ENCODE measurements at regions of chr1 and their contacts with region 1.

Region 1: GRCh38 chr1:59596441-59596861 is 218.3 kb upstream of the HOOK1 start:
- DNase-seq: peak; percentile 95
- ATAC-seq: peak; percentile 52
- H3K4me3 ChIP-seq: no peak overlapping the region
- H3K27ac ChIP-seq: peak overlapping the region; percentile 96
- H3K4me1 ChIP-seq: peaks cover 19% of the 10 kb centered on the region
- H3K27me3 ChIP-seq: no peaks in the 10 kb centered on the region
- CTCF ChIP-seq: no peak
- POLR2A ChIP-seq: no peak
- RAD21 ChIP-seq: peak; percentile 6; the same call in 1 of the 2 replicates

Region 2: GRCh38 chr1:59631561-59632255 is 35.3 kb after region 1 on chr1:
- CTCF ChIA-PET with region 1: no interaction called
- POLR2A ChIA-PET with region 1: no interaction called
- dilution Hi-C with region 1: no loop called
- in situ Hi-C with region 1: no loop called
- intact Hi-C with region 1: loop called (anchors 2 kb)
- DNase-seq: no peak
- ATAC-seq: no peak
- H3K4me3 ChIP-seq: no peak overlapping the region
- H3K27ac ChIP-seq: peak overlapping the region; percentile 35; the same call in 1 of the 2 replicates
- H3K4me1 ChIP-seq: no peaks in the 10 kb centered on the region
- H3K27me3 ChIP-seq: no peaks in the 10 kb centered on the region
- CTCF ChIP-seq: no peak
- POLR2A ChIP-seq: no peak
- RAD21 ChIP-seq: no peak

Region 3: GRCh38 chr1:59678493-59679228 is 82.2 kb after region 1 on chr1:
- CTCF ChIA-PET with region 1: interaction called, 3 read pairs
- POLR2A ChIA-PET with region 1: no interaction called
- dilution Hi-C with region 1: no loop called
- in situ Hi-C with region 1: no loop called
- intact Hi-C with region 1: loop called (anchors 5 kb)
- DNase-seq: peak; percentile 98
- ATAC-seq: peak; percentile 93
- H3K4me3 ChIP-seq: no peak overlapping the region
- H3K27ac ChIP-seq: no peak overlapping the region
- H3K4me1 ChIP-seq: peaks cover 3% of the 10 kb centered on the region; the same call in 1 of the 2 replicates
- H3K27me3 ChIP-seq: no peaks in the 10 kb centered on the region
- CTCF ChIP-seq: no peak
- POLR2A ChIP-seq: no peak
- RAD21 ChIP-seq: peak; percentile 27